Naive thymus-derived CD8-positive, alpha-beta T cell (primary cell): ENCODE measurements at regions of chr14 and their contacts with region 1.

Region 1: DNA sequence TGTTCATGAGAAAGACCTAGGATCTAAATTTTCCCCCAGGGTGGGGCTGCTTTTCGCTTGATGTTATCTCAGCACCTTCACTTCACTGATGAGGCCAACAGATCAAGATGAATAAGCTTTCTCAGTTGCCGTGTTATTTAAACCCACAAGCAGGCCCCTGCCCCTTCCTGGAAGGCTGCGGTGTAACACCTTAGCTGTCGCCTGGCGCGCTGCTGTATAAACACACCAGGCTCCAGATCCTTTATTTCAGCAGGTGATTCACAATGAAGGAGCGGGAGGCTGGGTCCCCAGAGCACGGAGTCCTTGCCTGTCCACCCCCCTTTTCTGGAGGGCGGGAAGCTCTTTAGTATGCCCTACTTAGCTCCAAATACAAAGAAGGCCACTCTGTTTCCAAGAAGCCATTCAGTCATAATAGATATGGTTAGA is 515.4 kb downstream of the FUT8 start:
- DNase-seq: peak; percentile 16 to 83 (median 64)
- ATAC-seq: peak; percentile 98
- H3K4me3 Mint-ChIP-seq: peak overlapping the region; percentile 48 to 82 (median 72)
- H3K27ac Mint-ChIP-seq: peak overlapping the region; percentile 84 to 97 (median 93)
- H3K4me1 Mint-ChIP-seq: peaks cover 34 to 76% (median 58%) of the 10 kb centered on the region in 4 donors
- H3K27me3 Mint-ChIP-seq: no peaks in the 10 kb centered on the region

Region 2: DNA sequence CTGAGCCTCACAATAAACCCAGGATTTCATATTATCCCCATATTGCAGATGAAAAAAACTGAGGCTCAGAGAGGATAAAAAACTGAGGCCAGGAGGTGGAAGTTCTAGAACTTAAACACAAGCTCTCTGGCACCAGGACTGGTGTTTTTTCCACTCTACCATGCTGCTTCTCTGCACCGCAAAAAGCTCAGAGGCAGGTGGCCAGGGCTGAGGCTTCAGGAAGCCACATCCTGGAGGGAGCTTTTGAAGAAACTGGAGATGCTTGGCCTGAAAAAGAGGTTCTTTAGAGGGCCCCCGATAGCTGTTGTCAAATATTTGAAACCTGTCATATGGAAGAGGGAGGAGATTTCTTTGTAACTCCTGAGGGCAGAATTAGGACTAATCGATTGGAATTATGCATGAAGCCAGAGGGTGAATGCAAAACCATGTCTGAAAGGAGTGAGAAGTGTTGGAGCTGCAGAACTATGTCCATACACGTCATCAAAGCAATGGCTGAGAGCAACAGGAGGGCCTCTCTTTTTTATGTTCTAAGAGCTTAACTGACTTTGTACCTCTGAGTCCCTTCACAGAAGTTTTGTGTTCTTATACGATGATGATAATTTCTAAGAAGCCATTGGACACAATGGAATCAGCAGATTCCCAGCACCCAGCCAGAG is 66.9 kb before region 1 on chr14:
- POLR2A ChIA-PET with region 1: interaction called, 19 read pairs
- DNase-seq: peak in 7 of 10 donors; percentile 18 to 72 (median 52)
- ATAC-seq: peak; percentile 82 to 92
- H3K4me3 Mint-ChIP-seq: peak overlapping the region; percentile 4 to 77 (median 46)
- H3K27ac Mint-ChIP-seq: peak overlapping the region; percentile 18 to 88 (median 81)
- H3K4me1 Mint-ChIP-seq: peaks cover 46 to 77% (median 66%) of the 10 kb centered on the region in 4 donors
- H3K27me3 Mint-ChIP-seq: no peaks in the 10 kb centered on the region

Region 3: DNA sequence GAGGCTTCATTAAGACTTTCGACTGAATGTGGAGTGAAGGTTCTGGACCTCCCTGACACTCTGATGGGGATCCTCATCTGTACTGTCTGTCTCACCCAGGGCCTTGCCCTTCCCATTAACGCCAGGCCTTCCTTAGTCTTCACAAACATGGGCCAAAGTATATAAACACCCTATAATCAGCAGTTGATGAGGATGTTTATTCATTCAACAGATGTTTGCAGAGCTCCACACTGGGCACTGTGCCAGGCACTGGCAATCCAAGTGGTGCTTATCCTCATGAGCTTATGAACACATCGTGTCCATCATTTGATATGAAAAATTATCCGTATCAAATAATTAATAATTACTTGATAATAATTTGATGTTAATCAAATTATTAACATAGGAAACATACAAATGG is 61.1 kb before region 1 on chr14:
- POLR2A ChIA-PET with region 1: interaction called, 19 read pairs
- DNase-seq: no peak
- ATAC-seq: no peak
- H3K4me3 Mint-ChIP-seq: no peak overlapping the region
- H3K27ac Mint-ChIP-seq: peak overlapping the region in 1 of 10 donors; percentile 51
- H3K4me1 Mint-ChIP-seq: peaks cover 33 to 49% (median 41%) of the 10 kb centered on the region in 4 donors
- H3K27me3 Mint-ChIP-seq: no peaks in the 10 kb centered on the region

Region 4: GRCh38 chr14:65915125-65915524 is 12.8 kb before region 1 on chr14:
- POLR2A ChIA-PET with region 1: interaction called, 11 read pairs
- DNase-seq: no peak
- ATAC-seq: no peak
- H3K4me3 Mint-ChIP-seq: no peak overlapping the region
- H3K27ac Mint-ChIP-seq: peak overlapping the region in 1 of 10 donors; percentile 10
- H3K4me1 Mint-ChIP-seq: peaks cover 26 to 54% (median 47%) of the 10 kb centered on the region in 4 donors
- H3K27me3 Mint-ChIP-seq: no peaks in the 10 kb centered on the region